ENCODE measurements at regions of chr16 and their contacts with region 1.

Region 1: DNA sequence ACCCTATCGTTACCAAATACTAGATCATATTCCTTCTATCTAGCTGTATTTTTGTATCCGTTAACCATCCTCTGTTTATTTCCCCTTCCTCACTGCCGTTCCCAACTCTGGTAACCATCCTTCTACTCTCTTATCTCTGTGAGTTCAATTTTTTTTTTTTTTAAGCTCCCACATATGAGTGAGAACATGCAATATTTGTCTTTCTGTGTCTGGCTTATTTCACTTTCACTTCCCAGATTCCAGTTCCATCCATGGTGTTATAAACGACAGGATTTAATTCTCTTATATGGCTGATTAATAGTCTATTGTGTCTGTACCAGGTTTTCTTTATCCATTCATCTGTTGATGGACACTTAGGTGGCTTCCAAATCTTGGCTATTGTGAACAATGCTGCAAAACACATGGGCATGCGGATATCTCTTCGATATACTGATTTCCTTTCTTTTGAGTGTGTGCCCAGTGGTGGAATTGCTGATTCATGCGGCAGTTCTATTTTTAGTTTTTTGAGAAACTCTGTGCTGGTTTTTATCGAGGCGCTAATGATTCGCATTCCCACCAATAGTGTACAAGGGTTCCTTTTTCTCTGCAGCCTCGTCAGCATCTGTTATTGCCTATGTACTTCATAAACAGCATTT is 599.6 kb downstream of the TMEM114 start:
- DNase-seq: no peak
- H3K4me3 ChIP-seq: no peak overlapping the region
- H3K27ac ChIP-seq: no peak overlapping the region
- H3K4me1 ChIP-seq: no peaks in the 10 kb centered on the region
- H3K27me3 ChIP-seq: no peaks in the 10 kb centered on the region
- CTCF ChIP-seq: no peak
- POLR2A ChIP-seq: no peak

Region 2: DNA sequence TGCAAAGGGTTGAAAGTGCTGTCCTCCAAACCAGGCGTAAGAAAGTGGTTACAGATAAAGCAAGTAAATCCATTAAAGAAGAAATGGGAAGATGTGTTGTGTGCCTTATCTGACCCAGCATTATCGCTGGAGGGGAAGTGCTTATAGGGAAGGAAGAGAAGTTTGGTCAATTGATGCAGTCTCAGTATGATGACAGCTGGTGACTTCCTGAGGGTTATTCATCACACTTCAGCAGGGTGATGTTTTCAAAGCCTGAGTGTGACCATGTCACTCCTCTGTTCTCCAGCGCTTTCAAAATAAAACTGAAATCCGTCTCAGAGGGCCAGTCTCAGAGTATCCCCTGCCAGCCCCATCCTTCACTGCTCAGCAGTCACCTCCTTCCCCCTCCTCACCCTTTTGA is 1163.5 kb before region 1 on chr16:
- intact Hi-C with region 1: no loop called
- DNase-seq: peak in 2 of 7 donors; percentile 7 to 18
- H3K4me3 ChIP-seq: no peak overlapping the region
- H3K27ac ChIP-seq: peak overlapping the region in 1 of 5 donors; percentile 16
- H3K4me1 ChIP-seq: no peaks in the 10 kb centered on the region
- H3K27me3 ChIP-seq: no peaks in the 10 kb centered on the region
- CTCF ChIP-seq: no peak
- POLR2A ChIP-seq: no peak

Region 3: DNA sequence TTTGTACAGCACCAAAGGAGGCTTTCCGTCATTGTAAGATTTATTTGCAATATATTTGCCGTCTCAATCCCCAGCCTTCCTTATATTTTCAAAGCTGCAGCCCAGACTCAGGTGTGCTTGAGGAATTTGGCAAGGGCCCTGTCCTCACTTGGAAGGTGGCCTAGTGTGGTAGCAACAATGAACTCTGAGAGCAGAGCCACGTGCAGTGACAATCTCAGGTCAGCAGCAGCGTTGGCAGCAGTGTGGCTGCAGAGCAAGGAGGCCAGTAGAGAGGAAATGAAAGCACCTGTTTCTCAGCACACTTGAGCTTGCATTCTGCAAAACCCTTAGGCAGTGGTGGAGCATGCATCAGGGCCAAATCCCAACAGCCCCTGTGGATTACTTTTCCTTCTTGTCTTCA is 44.6 kb before region 1 on chr16:
- intact Hi-C with region 1: loop called in 1 of 2 experiments (anchors 10 kb)
- DNase-seq: no peak
- H3K4me3 ChIP-seq: no peak overlapping the region
- H3K27ac ChIP-seq: no peak overlapping the region
- H3K4me1 ChIP-seq: no peaks in the 10 kb centered on the region
- H3K27me3 ChIP-seq: no peaks in the 10 kb centered on the region
- CTCF ChIP-seq: no peak
- POLR2A ChIP-seq: no peak

Region 4: GRCh38 chr16:8692502-8692901 is 701.8 kb after region 1 on chr16:
- intact Hi-C with region 1: no loop called
- DNase-seq: no peak
- H3K4me3 ChIP-seq: no peak overlapping the region
- H3K27ac ChIP-seq: no peak overlapping the region
- H3K4me1 ChIP-seq: no peaks in the 10 kb centered on the region
- H3K27me3 ChIP-seq: no peaks in the 10 kb centered on the region
- CTCF ChIP-seq: no peak
- POLR2A ChIP-seq: no peak